Dendritic cell treated with granulocyte-macrophage colony-stimulating factor and Interleukin-4, amounts not matched to agents 40 ng/mL and 50 ng/mL, for 4 days (primary cell): ENCODE measurements at regions of chr9 and their contacts with region 1.

Region 1: GRCh38 chr9:77456829-77457437 is 191.2 kb downstream of the GNA14 start:
- H3K4me3 Mint-ChIP-seq: no peak overlapping the region
- H3K27ac Mint-ChIP-seq: no peak overlapping the region
- H3K4me1 Mint-ChIP-seq: peaks cover 20% of the 10 kb centered on the region
- H3K27me3 Mint-ChIP-seq: no peaks in the 10 kb centered on the region

Region 2: GRCh38 chr9:77177161-77177893 is 279.6 kb before region 1 on chr9 and contains the start of gene VPS13A:
- intact Hi-C with region 1: loop called (anchors 10 kb)
- H3K4me3 Mint-ChIP-seq: peak within 1 kb of the TSS; percentile 81
- H3K27ac Mint-ChIP-seq: peak within 1 kb of the TSS; percentile 81
- H3K4me1 Mint-ChIP-seq: peaks cover 11% of the 10 kb centered on the region
- H3K27me3 Mint-ChIP-seq: peaks cover 15% of the 10 kb centered on the region

Region 3: DNA sequence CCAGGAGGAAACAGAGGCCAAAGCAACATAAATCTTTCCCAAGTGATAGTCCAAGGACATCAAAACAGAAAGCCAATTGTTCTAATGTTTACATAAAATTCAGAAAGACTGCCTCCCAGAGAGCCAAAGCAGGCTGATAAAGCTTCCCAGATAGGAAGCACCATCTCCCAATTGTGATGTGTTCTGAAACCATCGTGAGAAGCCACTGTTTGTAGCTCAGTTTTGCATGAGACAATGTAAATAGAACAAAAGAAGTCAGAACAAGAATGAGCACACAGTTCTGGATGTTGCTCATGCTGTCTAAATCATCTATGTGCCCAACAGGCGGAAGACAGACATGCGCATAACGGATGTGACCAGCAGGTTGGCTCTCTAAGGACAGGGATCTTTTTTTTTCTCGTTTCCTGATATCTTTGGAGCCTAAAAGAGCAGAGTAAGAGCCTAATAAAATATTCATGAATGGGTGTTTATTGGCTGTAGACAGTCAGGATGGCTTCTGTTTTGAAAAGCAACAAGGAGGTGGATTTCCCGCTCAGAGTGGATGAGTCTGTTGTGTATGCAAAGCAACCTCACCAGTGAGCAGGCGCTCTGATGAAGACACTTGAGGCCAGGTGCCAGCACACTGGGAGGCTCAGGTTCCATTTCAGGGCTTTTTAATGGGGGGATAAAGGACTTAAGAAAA is 77.6 kb after region 1 on chr9:
- intact Hi-C with region 1: no loop called
- H3K4me3 Mint-ChIP-seq: no peak overlapping the region
- H3K27ac Mint-ChIP-seq: no peak overlapping the region
- H3K4me1 Mint-ChIP-seq: no peaks in the 10 kb centered on the region
- H3K27me3 Mint-ChIP-seq: no peaks in the 10 kb centered on the region

Region 4: DNA sequence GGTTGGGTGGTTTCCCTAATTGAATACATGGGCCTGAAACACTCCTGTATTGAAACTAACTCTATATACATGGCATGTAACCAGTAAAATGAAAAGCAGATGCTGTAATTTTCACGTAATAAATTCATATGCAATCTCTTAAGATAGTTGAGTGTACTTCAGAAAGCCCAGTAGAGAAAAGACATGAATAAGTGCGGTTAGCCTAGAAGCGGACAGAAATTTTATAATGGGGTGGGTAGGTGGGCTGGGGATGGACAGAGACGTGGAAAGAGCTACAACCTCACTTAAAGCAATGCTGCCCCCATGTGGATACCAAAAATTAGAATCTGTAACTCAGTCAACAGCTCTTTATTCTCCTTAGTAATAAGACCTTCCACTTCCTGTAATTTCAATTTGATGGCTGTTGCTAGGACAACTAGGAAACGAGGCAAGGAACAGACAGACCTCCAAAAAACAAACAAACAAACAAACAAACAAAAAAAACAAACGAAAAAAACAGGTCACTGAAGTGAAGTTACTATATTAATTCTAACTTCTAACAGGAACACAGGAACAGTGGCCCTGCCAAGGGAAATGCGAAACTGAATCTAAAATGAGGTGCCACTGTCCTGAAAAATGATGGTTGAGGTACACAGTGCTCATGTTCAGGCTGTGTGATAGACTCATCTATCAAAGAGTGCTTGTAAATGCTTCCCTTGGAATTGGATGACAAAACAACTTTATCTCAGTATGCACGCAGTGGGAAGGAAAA is 294.6 kb after region 1 on chr9:
- intact Hi-C with region 1: loop called (anchors 2 kb)
- H3K4me3 Mint-ChIP-seq: no peak overlapping the region
- H3K27ac Mint-ChIP-seq: no peak overlapping the region
- H3K4me1 Mint-ChIP-seq: peaks cover 48% of the 10 kb centered on the region
- H3K27me3 Mint-ChIP-seq: no peaks in the 10 kb centered on the region

Region 5: GRCh38 chr9:78252616-78253015 is 795.7 kb after region 1 on chr9:
- intact Hi-C with region 1: loop called (anchors 10 kb)
- H3K4me3 Mint-ChIP-seq: no peak overlapping the region
- H3K27ac Mint-ChIP-seq: no peak overlapping the region
- H3K4me1 Mint-ChIP-seq: peaks cover 4% of the 10 kb centered on the region
- H3K27me3 Mint-ChIP-seq: no peaks in the 10 kb centered on the region